ENCODE measurements at regions of chr14 and their contacts with region 1.

Region 1: GRCh38 chr14:55245657-55246268 is 25.5 kb upstream of the FBXO34 start:
- DNase-seq: no peak
- H3K4me3 ChIP-seq: no peak overlapping the region
- H3K27ac ChIP-seq: no peak overlapping the region
- H3K27me3 ChIP-seq: peaks cover 6% of the 10 kb centered on the region
- CTCF ChIP-seq: peak; percentile 78

Region 2: GRCh38 chr14:55212634-55213033 is 33.1 kb before region 1 on chr14:
- CTCF ChIA-PET with region 1: interaction called, 10 read pairs
- POLR2A ChIA-PET with region 1: no interaction called
- DNase-seq: no peak
- H3K4me3 ChIP-seq: no peak overlapping the region
- H3K27ac ChIP-seq: no peak overlapping the region
- H3K27me3 ChIP-seq: no peaks in the 10 kb centered on the region
- CTCF ChIP-seq: no peak

Region 3: DNA sequence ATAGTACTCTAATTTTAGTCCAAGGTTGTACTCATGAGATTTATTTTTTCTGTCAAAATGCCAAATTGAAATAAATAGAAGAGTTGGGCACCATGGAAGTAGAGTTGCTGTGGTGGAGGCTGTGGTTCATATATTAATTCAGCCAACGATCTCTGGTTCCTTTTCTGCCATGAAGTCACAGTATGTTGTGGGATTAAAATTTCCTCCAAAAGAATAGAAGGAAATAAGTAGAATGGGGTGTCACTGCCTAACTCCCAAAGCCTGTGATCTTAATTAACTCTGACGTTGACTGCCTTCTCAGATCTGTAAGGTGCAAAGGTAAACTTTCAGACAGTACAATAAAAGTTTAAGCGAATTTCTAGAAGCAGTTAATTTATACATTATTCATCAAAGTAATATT is 12.2 kb before region 1 on chr14:
- CTCF ChIA-PET with region 1: interaction called, 16 read pairs
- POLR2A ChIA-PET with region 1: no interaction called
- DNase-seq: no peak
- H3K4me3 ChIP-seq: no peak overlapping the region
- H3K27ac ChIP-seq: no peak overlapping the region
- H3K27me3 ChIP-seq: peaks cover 17% of the 10 kb centered on the region
- CTCF ChIP-seq: no peak

Region 4: GRCh38 chr14:55265197-55265596 is 19.4 kb after region 1 on chr14:
- CTCF ChIA-PET with region 1: interaction called, 28 read pairs
- POLR2A ChIA-PET with region 1: no interaction called
- DNase-seq: no peak
- H3K4me3 ChIP-seq: no peak overlapping the region
- H3K27ac ChIP-seq: no peak overlapping the region
- H3K27me3 ChIP-seq: peaks cover 3% of the 10 kb centered on the region
- CTCF ChIP-seq: no peak

Region 5: GRCh38 chr14:55430024-55430690 is 184.4 kb after region 1 on chr14:
- CTCF ChIA-PET with region 1: interaction called, 23 read pairs
- POLR2A ChIA-PET with region 1: no interaction called
- DNase-seq: peak; percentile 67
- H3K4me3 ChIP-seq: no peak overlapping the region
- H3K27ac ChIP-seq: no peak overlapping the region
- H3K27me3 ChIP-seq: peaks cover 3% of the 10 kb centered on the region
- CTCF ChIP-seq: peak; percentile 64